HEK293T (cell line): ENCODE measurements at regions of chr6 and their contacts with region 1.

Region 1: DNA sequence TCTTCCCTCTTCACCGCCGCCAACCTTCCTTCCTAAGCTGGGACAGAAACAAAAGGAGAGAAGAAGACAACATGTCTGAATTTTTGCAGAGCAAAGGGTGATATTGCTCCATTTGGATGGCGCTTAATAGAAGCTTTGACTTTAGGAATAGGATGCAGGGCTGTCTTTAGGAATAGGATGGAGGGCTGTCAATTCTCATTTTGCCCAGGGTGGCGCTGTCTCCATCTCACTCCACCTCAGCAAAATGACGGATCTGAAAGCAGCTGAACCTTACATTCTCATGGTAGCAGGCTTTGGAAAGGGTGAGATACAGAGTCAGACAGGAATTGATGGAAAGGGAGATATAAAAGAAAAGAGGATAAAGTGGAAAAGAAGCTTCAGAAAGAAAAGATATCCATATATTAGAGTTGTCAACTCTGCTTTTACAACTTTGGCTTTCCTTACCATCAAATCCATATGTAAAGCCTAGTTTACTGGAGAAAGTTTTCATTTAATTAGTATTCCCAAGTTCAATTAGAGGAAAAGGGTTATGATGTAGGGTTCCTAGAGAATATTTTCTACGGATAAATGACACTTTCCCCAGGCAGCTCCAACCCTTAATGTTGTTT is 2.4 kb downstream of the MTCL3 start:
- DNase-seq: peak; percentile 78

Region 2: GRCh38 chr6:127464881-127465459 is 51.8 kb before region 1 on chr6:
- CTCF ChIA-PET with region 1: interaction called, 15 read pairs
- POLR2A ChIA-PET with region 1: interaction called, 4 read pairs
- DNase-seq: peak; percentile 74

Region 3: GRCh38 chr6:127496471-127496870 is 20.3 kb before region 1 on chr6:
- CTCF ChIA-PET with region 1: interaction called, 13 read pairs
- POLR2A ChIA-PET with region 1: interaction called, 27 read pairs
- DNase-seq: no peak

Region 4: GRCh38 chr6:127533011-127533410 is 16.2 kb after region 1 on chr6:
- CTCF ChIA-PET with region 1: interaction called, 12 read pairs
- POLR2A ChIA-PET with region 1: interaction called, 10 read pairs
- DNase-seq: no peak

Region 5: DNA sequence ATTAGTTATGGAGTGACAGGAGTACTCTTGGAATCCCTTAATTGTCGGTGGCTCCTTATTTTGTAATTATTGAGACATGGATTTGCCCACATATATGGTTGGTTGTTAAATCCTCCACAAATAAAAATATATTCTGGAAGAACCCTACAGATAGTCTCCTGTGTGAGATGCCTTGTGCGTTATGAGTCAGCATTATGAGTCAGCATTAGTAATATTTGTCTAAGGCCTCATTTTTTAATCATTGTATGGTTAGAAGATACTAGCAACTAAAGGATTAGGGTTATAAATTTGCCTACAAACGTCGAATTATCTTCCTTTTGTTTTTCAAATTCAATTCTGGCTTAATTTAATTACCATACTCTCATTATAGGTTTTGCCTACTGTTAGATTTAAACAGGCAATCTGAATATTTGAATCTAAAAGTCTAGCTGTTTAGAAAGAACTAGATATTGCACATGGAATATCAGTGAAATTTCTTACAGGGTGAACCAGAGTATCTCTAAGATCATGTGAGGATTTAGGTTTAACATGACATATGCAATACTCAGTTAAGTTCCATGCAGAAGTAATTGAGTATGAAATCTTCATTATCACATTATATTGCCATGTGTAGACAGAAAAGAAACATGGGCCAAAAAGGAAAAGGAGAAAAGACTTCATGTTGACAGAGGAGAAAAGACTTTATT is 66.2 kb after region 1 on chr6:
- CTCF ChIA-PET with region 1: no interaction called
- POLR2A ChIA-PET with region 1: no interaction called
- DNase-seq: no peak